ENCODE measurements at regions of chr7 and their contacts with region 1.

Region 1: DNA sequence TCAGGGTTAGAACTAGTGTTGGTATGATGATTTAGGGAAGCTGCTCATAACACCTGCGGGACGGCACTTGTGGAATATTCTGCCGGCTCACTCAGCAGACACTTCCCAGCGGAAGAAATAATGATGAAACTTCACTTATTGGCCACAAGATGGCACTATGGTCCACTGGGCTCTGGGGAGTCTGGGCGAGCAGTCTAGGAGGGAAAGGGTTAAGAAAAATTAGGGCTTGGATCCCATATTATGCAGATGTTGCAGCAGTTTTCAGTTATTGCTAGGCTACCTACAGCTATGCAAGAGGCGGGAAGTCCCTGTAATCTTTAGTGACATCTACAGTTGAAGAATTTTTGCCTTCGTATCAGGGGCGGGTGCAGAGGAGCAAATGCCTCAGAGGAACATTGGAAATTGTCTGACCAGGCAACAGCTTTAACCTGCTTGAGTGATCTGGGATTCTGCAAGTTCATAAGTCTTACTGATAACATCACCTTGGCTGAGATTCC is 238.7 kb upstream of the PRSS58 start:
- DNase-seq: peak; percentile 63
- H3K4me3 Mint-ChIP-seq: no peak overlapping the region
- H3K27ac Mint-ChIP-seq: no peak overlapping the region
- H3K4me1 Mint-ChIP-seq: peaks cover 26% of the 10 kb centered on the region
- H3K27me3 Mint-ChIP-seq: peaks cover 28% of the 10 kb centered on the region
- CTCF ChIP-seq: peak; percentile 81

Region 2: DNA sequence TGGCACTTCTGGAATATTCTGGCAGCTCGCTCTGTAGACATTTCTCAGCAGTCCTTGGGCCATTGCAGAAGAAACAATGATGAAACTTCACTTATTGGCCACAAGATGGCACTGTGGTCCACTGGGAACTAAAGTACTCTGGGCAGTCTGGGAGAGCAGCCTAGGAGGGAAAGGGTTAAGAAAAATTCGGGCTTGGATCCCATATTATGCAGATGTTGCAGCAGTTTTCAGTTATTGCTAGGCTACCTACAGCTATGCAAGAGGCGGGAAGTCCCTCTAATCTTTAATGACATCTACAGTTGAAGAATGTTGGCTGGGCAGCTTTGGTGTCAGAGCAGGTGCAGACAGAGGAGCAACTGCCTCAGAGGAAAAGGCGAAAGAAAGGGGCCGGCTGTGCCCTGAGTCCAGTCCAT is 37.0 kb before region 1 on chr7:
- CTCF ChIA-PET with region 1: interaction called, 32 read pairs
- POLR2A ChIA-PET with region 1: no interaction called
- intact Hi-C with region 1: loop called (anchors 1 kb)
- DNase-seq: peak; percentile 82
- H3K4me3 Mint-ChIP-seq: no peak overlapping the region
- H3K27ac Mint-ChIP-seq: no peak overlapping the region
- H3K4me1 Mint-ChIP-seq: peaks cover 10% of the 10 kb centered on the region
- H3K27me3 Mint-ChIP-seq: peaks cover 42% of the 10 kb centered on the region
- CTCF ChIP-seq: peak; percentile 65

Region 3: GRCh38 chr7:142508258-142508689 is 11.7 kb after region 1 on chr7:
- CTCF ChIA-PET with region 1: interaction called, 319 read pairs
- POLR2A ChIA-PET with region 1: no interaction called
- intact Hi-C with region 1: no loop called
- DNase-seq: peak; percentile 21
- H3K4me3 Mint-ChIP-seq: no peak overlapping the region
- H3K27ac Mint-ChIP-seq: peak overlapping the region; percentile 52
- H3K4me1 Mint-ChIP-seq: peaks cover 6% of the 10 kb centered on the region
- H3K27me3 Mint-ChIP-seq: peaks cover 11% of the 10 kb centered on the region
- CTCF ChIP-seq: no peak

Region 4: DNA sequence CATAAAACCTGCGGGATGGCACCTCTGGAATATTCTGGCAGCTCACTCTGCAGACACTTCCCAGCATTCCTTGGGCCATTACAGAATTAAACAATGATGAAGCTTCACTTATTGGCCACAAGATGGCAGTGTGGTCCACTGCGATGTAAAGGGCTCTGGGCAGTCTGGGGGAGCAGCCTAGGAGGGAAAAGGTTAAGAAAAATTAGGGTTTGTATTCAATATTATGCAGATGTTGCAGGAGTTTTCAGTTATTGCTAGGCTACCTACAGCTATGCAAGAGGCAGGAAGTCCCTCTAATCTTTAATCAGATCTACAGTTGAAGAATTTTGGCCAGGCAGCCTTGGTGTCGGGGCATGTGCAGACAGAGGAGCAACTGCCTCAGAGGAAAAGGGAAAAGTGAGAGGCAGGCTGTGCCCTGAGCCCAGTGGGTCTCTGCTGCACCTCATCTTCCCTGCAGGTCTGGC is 19.5 kb after region 1 on chr7:
- CTCF ChIA-PET with region 1: interaction called, 319 read pairs
- POLR2A ChIA-PET with region 1: interaction called, 3 read pairs
- intact Hi-C with region 1: loop called (anchors 2 kb)
- DNase-seq: peak; percentile 81
- H3K4me3 Mint-ChIP-seq: no peak overlapping the region
- H3K27ac Mint-ChIP-seq: no peak overlapping the region
- H3K4me1 Mint-ChIP-seq: peaks cover 20% of the 10 kb centered on the region
- H3K27me3 Mint-ChIP-seq: no peaks in the 10 kb centered on the region
- CTCF ChIP-seq: peak; percentile 80

Region 5: GRCh38 chr7:142523821-142524460 is 27.3 kb after region 1 on chr7:
- CTCF ChIA-PET with region 1: interaction called, 319 read pairs
- POLR2A ChIA-PET with region 1: interaction called, 3 read pairs
- intact Hi-C with region 1: loop called (anchors 2 kb)
- DNase-seq: no peak
- H3K4me3 Mint-ChIP-seq: no peak overlapping the region
- H3K27ac Mint-ChIP-seq: no peak overlapping the region
- H3K4me1 Mint-ChIP-seq: no peaks in the 10 kb centered on the region
- H3K27me3 Mint-ChIP-seq: peaks cover 36% of the 10 kb centered on the region
- CTCF ChIP-seq: no peak